ENCODE measurements at regions of chr12 and their contacts with region 1.

Region 1: GRCh38 chr12:127711108-127711507 is 555.9 kb upstream of the TMEM132C start:
- DNase-seq: peak in 1 of 2 experiments; percentile 83
- H3K4me3 ChIP-seq: no peak overlapping the region
- H3K27ac ChIP-seq: no peak overlapping the region
- H3K4me1 ChIP-seq: peaks cover 0 to 6% (median 2%) of the 10 kb centered on the region in 4 experiments; a peak in 3 of 7 replicates
- H3K27me3 ChIP-seq: no peaks in the 10 kb centered on the region
- CTCF ChIP-seq: peak; percentile 74 to 79 (median 76)
- EP300 ChIP-seq: no peak
- POLR2A ChIP-seq: no peak
- RAD21 ChIP-seq: peak; percentile 65 to 72

Region 2: DNA sequence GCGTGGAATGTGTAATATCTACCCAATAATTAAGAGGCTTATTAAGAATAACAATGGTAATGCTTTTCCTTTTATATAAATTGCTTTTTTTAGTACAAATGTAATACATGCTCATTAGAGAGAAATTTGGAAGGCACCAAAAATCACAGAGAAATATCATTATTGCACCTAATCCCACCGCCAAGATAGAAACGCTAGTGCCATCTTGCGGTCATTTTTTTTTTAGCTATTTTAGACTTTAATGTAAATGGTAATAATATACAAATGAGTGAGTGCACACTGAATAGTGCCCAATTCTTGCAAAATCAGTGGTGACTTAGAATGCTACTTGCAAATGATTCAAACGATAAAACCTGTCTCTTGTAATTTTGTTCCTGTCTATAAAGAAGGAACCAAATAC is 20.9 kb before region 1 on chr12:
- CTCF ChIA-PET with region 1: interaction called, 13 read pairs
- POLR2A ChIA-PET with region 1: no interaction called
- DNase-seq: no peak
- H3K4me3 ChIP-seq: no peak overlapping the region
- H3K27ac ChIP-seq: no peak overlapping the region
- H3K4me1 ChIP-seq: peaks cover 0 to 4% (median 2%) of the 10 kb centered on the region in 4 experiments; a peak in 3 of 7 replicates
- H3K27me3 ChIP-seq: no peaks in the 10 kb centered on the region
- CTCF ChIP-seq: peak in 2 of 3 experiments; percentile 4 to 14; a peak in 2 of 4 replicates
- EP300 ChIP-seq: no peak
- POLR2A ChIP-seq: no peak
- RAD21 ChIP-seq: peak; percentile 48 to 57

Region 3: DNA sequence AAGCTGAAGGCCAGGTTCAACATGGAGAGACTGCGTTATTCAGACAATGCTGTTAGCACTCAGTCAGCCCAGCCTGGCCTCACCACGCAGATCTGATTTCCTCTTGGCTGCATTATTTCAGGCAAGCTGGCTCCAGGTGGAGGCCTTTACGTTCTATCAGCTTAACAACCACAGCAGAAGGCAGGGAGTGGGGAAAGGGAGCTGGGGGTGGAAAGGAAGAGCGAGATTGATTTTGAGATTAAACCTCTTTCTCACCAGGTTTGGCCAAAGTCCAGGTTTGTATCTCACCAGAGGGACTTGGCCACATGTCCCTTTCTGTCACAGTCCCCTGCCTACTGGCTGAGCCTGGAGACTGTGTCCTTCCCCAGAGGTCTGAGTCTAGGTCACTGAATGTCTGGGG is 12.1 kb after region 1 on chr12:
- CTCF ChIA-PET with region 1: interaction called, 49 read pairs
- POLR2A ChIA-PET with region 1: no interaction called
- DNase-seq: no peak
- H3K4me3 ChIP-seq: no peak overlapping the region
- H3K27ac ChIP-seq: no peak overlapping the region
- H3K4me1 ChIP-seq: peaks cover 0 to 4% (median 0%) of the 10 kb centered on the region in 4 experiments; a peak in 2 of 7 replicates
- H3K27me3 ChIP-seq: no peaks in the 10 kb centered on the region
- CTCF ChIP-seq: no peak
- EP300 ChIP-seq: no peak
- POLR2A ChIP-seq: no peak
- RAD21 ChIP-seq: no peak

Region 4: GRCh38 chr12:127731619-127732018 is 20.5 kb after region 1 on chr12:
- CTCF ChIA-PET with region 1: interaction called, 22 read pairs
- POLR2A ChIA-PET with region 1: no interaction called
- DNase-seq: no peak
- H3K4me3 ChIP-seq: no peak overlapping the region
- H3K27ac ChIP-seq: no peak overlapping the region
- H3K4me1 ChIP-seq: no peaks in the 10 kb centered on the region
- H3K27me3 ChIP-seq: no peaks in the 10 kb centered on the region
- CTCF ChIP-seq: no peak
- EP300 ChIP-seq: no peak
- POLR2A ChIP-seq: no peak
- RAD21 ChIP-seq: no peak

Region 5: GRCh38 chr12:127767656-127768055 is 56.5 kb after region 1 on chr12:
- CTCF ChIA-PET with region 1: interaction called, 13 read pairs
- POLR2A ChIA-PET with region 1: no interaction called
- DNase-seq: no peak
- H3K4me3 ChIP-seq: no peak overlapping the region
- H3K27ac ChIP-seq: no peak overlapping the region
- H3K4me1 ChIP-seq: no peaks in the 10 kb centered on the region
- H3K27me3 ChIP-seq: no peaks in the 10 kb centered on the region
- CTCF ChIP-seq: no peak
- EP300 ChIP-seq: no peak
- POLR2A ChIP-seq: no peak
- RAD21 ChIP-seq: no peak

Region 6: DNA sequence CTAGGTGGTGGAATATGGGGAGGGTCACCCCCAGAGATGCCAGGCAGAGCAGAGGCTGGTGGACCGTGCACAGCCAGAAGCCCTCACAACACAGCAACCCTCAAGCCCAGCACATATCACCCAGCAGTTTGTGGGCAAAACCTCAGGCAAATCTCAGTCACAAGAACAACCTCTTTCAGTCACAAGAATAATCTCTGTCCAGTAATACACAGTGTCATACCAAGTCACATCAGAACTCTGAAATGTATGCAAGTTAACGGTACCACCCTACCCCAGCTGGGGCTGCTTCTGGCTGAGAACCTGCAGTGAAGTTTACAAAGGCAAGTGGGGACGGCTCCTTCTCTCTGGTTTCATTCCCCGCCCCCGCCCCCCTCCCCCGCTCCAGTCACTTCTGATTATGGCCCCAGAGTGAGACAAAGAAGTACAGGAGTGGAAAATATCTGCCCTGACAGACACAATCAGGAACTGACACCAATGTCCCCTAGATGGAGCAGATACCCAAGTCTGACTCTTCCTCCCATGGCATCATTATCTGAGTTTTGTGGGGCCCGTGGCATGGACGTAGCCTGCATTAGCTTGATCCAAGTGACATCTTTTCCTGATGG is 75.0 kb after region 1 on chr12:
- CTCF ChIA-PET with region 1: no interaction called
- POLR2A ChIA-PET with region 1: no interaction called
- DNase-seq: no peak
- H3K4me3 ChIP-seq: no peak overlapping the region
- H3K27ac ChIP-seq: no peak overlapping the region
- H3K4me1 ChIP-seq: no peaks in the 10 kb centered on the region
- H3K27me3 ChIP-seq: no peaks in the 10 kb centered on the region
- CTCF ChIP-seq: no peak
- EP300 ChIP-seq: no peak
- POLR2A ChIP-seq: no peak
- RAD21 ChIP-seq: no peak

Region 7: GRCh38 chr12:127925971-127926370 is 214.9 kb after region 1 on chr12:
- CTCF ChIA-PET with region 1: interaction called, 26 read pairs
- POLR2A ChIA-PET with region 1: no interaction called
- DNase-seq: peak; percentile 7 to 49
- H3K4me3 ChIP-seq: no peak overlapping the region
- H3K27ac ChIP-seq: no peak overlapping the region
- H3K4me1 ChIP-seq: no peaks in the 10 kb centered on the region
- H3K27me3 ChIP-seq: no peaks in the 10 kb centered on the region
- CTCF ChIP-seq: peak; percentile 64 to 76 (median 76)
- EP300 ChIP-seq: no peak
- POLR2A ChIP-seq: no peak
- RAD21 ChIP-seq: peak; percentile 90 to 95

Region 8: DNA sequence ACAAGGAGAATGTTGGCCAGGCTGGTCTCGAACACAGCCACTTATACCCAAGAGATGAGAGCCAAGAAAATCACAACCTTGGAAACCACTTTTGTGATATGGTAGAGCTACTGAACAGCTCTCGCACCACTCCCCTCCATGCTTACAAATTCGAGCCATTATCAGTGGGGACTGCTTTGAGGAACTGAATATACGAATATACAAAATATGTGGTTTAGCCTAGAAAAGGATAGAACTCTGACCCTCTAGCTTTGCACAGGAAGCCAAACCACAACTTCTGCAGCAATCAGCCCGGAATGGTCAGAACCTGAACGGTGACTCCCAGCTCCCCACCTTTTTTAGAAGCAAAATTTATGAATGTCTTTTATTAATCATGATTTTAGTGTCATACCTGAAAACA is 426.0 kb after region 1 on chr12:
- CTCF ChIA-PET with region 1: no interaction called
- POLR2A ChIA-PET with region 1: no interaction called
- DNase-seq: no peak
- H3K4me3 ChIP-seq: no peak overlapping the region
- H3K27ac ChIP-seq: no peak overlapping the region
- H3K4me1 ChIP-seq: no peaks in the 10 kb centered on the region
- H3K27me3 ChIP-seq: no peaks in the 10 kb centered on the region
- CTCF ChIP-seq: no peak
- EP300 ChIP-seq: no peak
- POLR2A ChIP-seq: no peak
- RAD21 ChIP-seq: no peak